ENCODE measurements at regions of chr21 and their contacts with region 1.

Region 1: DNA sequence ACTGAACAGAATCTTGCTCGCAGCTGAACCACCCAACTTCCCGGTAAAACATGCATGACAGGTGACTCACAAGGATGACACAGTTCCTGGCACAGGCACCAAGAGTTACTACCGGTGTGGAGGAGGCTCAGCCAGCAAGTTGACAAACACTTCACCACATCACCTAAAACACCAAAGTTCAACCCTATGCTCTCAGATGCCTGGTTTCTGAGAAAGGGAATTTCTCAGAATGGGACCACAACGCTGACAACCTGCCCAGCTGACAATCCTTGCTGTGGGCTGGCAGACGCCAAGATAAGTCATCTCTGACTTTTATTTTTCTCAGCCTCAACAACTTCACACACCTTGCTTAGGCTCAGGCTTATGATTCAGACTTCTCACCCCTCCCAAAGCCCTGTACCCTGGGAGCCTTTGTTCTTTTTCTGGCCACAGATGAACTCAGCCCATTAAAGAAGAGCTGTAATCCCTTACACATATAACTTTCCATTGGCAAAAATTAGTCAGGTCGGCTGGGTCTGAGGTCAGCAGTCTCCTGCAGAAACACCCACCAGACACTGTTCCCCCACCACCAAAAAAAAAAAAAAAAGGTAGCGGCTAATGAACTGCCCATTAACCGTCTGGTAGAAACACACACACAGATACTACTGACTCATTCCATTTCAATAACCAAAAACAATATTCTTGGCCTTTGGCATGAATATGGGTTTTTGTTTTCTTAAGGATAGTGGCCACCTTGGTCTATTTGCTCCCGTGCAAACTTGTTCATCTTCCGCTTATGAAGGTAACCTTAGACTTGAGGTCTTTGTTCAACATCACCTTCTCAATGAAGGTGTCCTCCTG is 10.8 kb upstream of the TIAM1 start:
- DNase-seq: peak; percentile 17 to 85 (median 76)
- ATAC-seq: peak; percentile 92
- H3K4me3 ChIP-seq: no peak overlapping the region
- H3K4me3 Mint-ChIP-seq: peak overlapping the region; percentile 4 to 74 (median 60)
- H3K27ac ChIP-seq: peak overlapping the region; percentile 46
- H3K27ac Mint-ChIP-seq: peak overlapping the region; percentile 48 to 95 (median 70)
- H3K4me1 ChIP-seq: peaks cover 8 to 28% of the 10 kb centered on the region in 2 donors
- H3K4me1 Mint-ChIP-seq: peaks cover 11 to 52% (median 43%) of the 10 kb centered on the region in 7 donors
- H3K27me3 ChIP-seq: no peaks in the 10 kb centered on the region
- H3K27me3 Mint-ChIP-seq: no peaks in the 10 kb centered on the region

Region 2: DNA sequence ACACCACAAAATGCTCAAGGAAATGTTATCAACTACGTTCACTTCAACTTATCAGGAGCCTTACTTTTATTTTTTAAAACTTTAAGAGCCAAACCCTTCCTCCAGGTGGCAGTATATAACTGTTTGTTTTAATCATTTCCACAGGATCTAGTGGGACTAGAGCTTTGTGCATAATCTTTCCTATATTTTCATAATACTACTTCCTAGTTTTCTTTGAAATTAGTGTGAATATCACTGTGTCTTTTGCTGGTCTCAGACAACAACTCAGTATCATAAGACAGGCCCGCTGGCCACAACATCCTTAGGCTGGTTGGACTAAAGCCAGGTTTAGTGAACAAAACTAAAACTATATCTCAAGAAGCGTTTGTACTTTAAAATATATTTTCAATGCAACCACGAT is 156.2 kb before region 1 on chr21:
- CTCF ChIA-PET with region 1: no interaction called
- POLR2A ChIA-PET with region 1: no interaction called
- intact Hi-C with region 1: loop called in 1 of 2 experiments (anchors 2 kb)
- DNase-seq: peak in 5 of 9 donors; percentile 51 to 63 (median 58)
- ATAC-seq: peak; percentile 74
- H3K4me3 ChIP-seq: no peak overlapping the region
- H3K4me3 Mint-ChIP-seq: peak overlapping the region in 3 of 10 donors; percentile 11 to 40 (median 13)
- H3K27ac ChIP-seq: no peak overlapping the region
- H3K27ac Mint-ChIP-seq: no peak overlapping the region
- H3K4me1 ChIP-seq: no peaks in the 10 kb centered on the region
- H3K4me1 Mint-ChIP-seq: peaks cover 14 to 42% (median 36%) of the 10 kb centered on the region in 7 donors
- H3K27me3 ChIP-seq: no peaks in the 10 kb centered on the region
- H3K27me3 Mint-ChIP-seq: no peaks in the 10 kb centered on the region

Region 3: DNA sequence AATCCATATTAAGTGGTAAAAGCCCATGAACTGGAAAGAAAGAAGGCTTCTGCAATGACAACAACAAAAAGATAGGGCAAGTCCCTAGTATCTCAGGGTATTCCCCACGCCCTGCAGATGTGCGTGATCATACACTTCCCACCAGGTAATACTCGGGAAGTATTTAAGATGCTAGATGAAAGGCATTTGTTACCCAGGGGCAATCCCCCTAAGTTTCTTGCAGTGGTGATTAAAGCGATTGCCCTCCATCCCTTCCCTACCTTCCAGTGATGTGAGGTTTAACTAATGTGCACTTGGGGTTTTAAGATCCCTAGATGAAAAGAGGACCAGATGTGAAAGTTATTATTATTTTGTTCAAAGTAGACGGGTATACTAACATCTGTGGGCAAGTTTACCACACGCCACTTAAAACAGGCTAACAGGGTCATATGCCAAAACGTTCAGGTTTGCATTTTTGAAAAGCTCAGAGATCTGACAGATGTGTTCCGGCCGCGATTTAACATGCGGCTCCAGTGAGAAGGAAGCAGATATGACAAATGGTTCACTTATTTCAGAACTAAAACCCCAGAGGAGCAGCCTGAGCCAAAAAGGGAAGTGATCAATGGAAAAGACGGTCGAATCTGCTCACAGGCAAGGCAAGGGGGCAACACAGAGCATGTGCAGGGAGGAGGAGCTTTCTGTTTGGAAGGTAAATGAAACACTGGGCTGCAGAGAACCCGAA is 28.1 kb before region 1 on chr21:
- CTCF ChIA-PET with region 1: no interaction called
- POLR2A ChIA-PET with region 1: no interaction called
- intact Hi-C with region 1: loop called in 1 of 2 experiments (anchors 1 kb)
- DNase-seq: peak in 8 of 9 donors; percentile 22 to 52 (median 37)
- ATAC-seq: peak; percentile 79
- H3K4me3 ChIP-seq: peak overlapping the region; percentile 3
- H3K4me3 Mint-ChIP-seq: peak overlapping the region; percentile 66 to 86 (median 75)
- H3K27ac ChIP-seq: no peak overlapping the region
- H3K27ac Mint-ChIP-seq: peak overlapping the region; percentile 5 to 84 (median 45)
- H3K4me1 ChIP-seq: peaks cover 0 to 6% of the 10 kb centered on the region in 2 donors
- H3K4me1 Mint-ChIP-seq: peaks cover 13 to 28% (median 21%) of the 10 kb centered on the region in 7 donors
- H3K27me3 ChIP-seq: no peaks in the 10 kb centered on the region
- H3K27me3 Mint-ChIP-seq: no peaks in the 10 kb centered on the region

Region 4: DNA sequence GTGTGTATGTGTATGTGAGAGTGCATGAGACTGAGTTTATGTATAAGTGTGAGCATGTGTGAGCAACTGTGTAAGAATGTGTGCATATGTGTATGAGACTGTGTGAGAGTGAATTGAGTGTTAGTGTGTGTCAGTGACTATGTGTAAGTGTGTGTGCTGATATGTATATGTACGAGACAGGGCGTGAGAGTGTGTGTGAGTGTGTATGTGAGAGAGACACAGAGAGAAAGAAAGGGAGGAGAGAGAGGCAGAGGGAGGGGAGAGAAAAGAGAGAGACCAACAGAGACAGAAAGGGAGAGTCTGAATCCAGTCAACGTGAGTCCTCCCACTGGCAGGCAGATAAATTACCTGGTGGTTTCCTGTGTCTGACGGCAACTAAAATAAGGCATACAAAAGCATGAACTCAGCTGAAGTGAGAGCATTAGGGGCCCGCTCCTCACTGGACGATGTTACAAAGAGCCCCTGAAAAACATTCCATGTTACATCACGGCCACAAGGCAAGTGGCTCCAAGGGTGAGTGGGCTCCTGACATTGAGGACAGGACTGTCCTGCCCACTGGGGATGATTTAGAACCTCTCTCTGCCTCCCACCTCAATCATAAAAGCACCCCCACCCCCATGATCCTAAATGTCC is 55.8 kb after region 1 on chr21:
- CTCF ChIA-PET with region 1: no interaction called
- POLR2A ChIA-PET with region 1: no interaction called
- intact Hi-C with region 1: loop called in 1 of 2 experiments (anchors 5 kb)
- DNase-seq: peak in 6 of 9 donors; percentile 20 to 52 (median 38)
- ATAC-seq: peak; percentile 63
- H3K4me3 ChIP-seq: no peak overlapping the region
- H3K4me3 Mint-ChIP-seq: no peak overlapping the region
- H3K27ac ChIP-seq: no peak overlapping the region
- H3K27ac Mint-ChIP-seq: no peak overlapping the region
- H3K4me1 ChIP-seq: peaks cover 0 to 15% of the 10 kb centered on the region in 2 donors
- H3K4me1 Mint-ChIP-seq: peaks cover 2 to 23% (median 11%) of the 10 kb centered on the region in 7 donors
- H3K27me3 ChIP-seq: no peaks in the 10 kb centered on the region
- H3K27me3 Mint-ChIP-seq: no peaks in the 10 kb centered on the region

Region 5: GRCh38 chr21:31509194-31510017 is 154.6 kb after region 1 on chr21:
- CTCF ChIA-PET with region 1: no interaction called
- POLR2A ChIA-PET with region 1: no interaction called
- intact Hi-C with region 1: loop called in 1 of 2 experiments (anchors 1 kb)
- DNase-seq: peak; percentile 24 to 81 (median 54)
- ATAC-seq: peak; percentile 66
- H3K4me3 ChIP-seq: no peak overlapping the region
- H3K4me3 Mint-ChIP-seq: peak overlapping the region in 8 of 10 donors; percentile 32 to 79 (median 60)
- H3K27ac ChIP-seq: no peak overlapping the region
- H3K27ac Mint-ChIP-seq: peak overlapping the region in 7 of 9 donors; percentile 7 to 83 (median 78)
- H3K4me1 ChIP-seq: peaks cover 6 to 16% of the 10 kb centered on the region in 2 donors
- H3K4me1 Mint-ChIP-seq: peaks cover 14 to 47% (median 34%) of the 10 kb centered on the region in 7 donors
- H3K27me3 ChIP-seq: no peaks in the 10 kb centered on the region
- H3K27me3 Mint-ChIP-seq: peaks cover 0 to 57% (median 0%) of the 10 kb centered on the region in 5 donors

Measured in naive thymus-derived CD4-positive, alpha-beta T cell (primary cell).